Body of pancreas (tissue), 4 donors: ENCODE measurements at regions of chr5 and their contacts with region 1.

Region 1: GRCh38 chr5:158695595-158696330 is 404.0 kb downstream of the EBF1 start:
- DNase-seq: peak; percentile 59 to 78 (median 68)
- ATAC-seq: peak; percentile 82
- H3K4me3 ChIP-seq: no peak overlapping the region
- H3K27ac ChIP-seq: no peak overlapping the region
- H3K4me1 ChIP-seq: peaks cover 6% of the 10 kb centered on the region
- H3K27me3 ChIP-seq: peaks cover 0 to 3% of the 10 kb centered on the region in 2 donors
- CTCF ChIP-seq: peak; percentile 80 to 98 (median 91)
- POLR2A ChIP-seq: no peak

Region 2: GRCh38 chr5:158174918-158175851 is 520.6 kb before region 1 on chr5:
- intact Hi-C with region 1: loop called (anchors 10 kb)
- DNase-seq: peak; percentile 61 to 72 (median 70)
- ATAC-seq: peak; percentile 76
- H3K4me3 ChIP-seq: no peak overlapping the region
- H3K27ac ChIP-seq: no peak overlapping the region
- H3K4me1 ChIP-seq: peaks cover 9% of the 10 kb centered on the region
- H3K27me3 ChIP-seq: no peaks in the 10 kb centered on the region
- CTCF ChIP-seq: peak; percentile 45 to 87 (median 73)
- POLR2A ChIP-seq: no peak

Region 3: GRCh38 chr5:158857976-158858375 is 162.2 kb after region 1 on chr5:
- intact Hi-C with region 1: no loop called
- DNase-seq: no peak
- ATAC-seq: no peak
- H3K4me3 ChIP-seq: no peak overlapping the region
- H3K27ac ChIP-seq: no peak overlapping the region
- H3K4me1 ChIP-seq: no peaks in the 10 kb centered on the region
- H3K27me3 ChIP-seq: no peaks in the 10 kb centered on the region
- CTCF ChIP-seq: no peak
- POLR2A ChIP-seq: no peak

Region 4: DNA sequence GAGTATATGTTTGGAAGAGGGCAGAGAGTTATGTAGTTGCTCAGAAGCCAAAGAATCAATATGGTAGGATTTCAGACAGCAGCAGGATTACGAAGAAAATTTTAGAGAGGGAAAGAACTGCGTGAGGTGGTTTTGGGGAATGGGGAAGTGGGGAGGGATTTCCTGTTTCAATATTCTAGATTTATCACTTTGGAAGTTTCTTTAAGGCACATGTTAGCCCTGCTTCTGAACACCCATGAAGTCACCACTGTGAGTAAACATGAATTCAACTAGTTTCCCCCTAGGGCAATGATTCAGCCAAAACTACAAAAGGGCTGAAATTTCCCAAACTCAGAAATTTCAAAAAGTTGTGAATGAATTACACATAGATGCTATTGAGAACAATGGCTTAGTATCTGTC is 271.8 kb after region 1 on chr5:
- intact Hi-C with region 1: no loop called
- DNase-seq: no peak
- ATAC-seq: no peak
- H3K4me3 ChIP-seq: no peak overlapping the region
- H3K27ac ChIP-seq: no peak overlapping the region
- H3K4me1 ChIP-seq: no peaks in the 10 kb centered on the region
- H3K27me3 ChIP-seq: no peaks in the 10 kb centered on the region
- CTCF ChIP-seq: no peak
- POLR2A ChIP-seq: no peak